ENCODE measurements at regions of chr11 and their contacts with region 1.

Region 1: GRCh38 chr11:65418711-65419459 is 3.7 kb upstream of the NEAT1 start:
- DNase-seq: peak; percentile 98 to 99
- ATAC-seq: peak; percentile 63
- H3K4me3 ChIP-seq: no peak overlapping the region
- H3K27ac ChIP-seq: peak overlapping the region; percentile 97
- H3K4me1 ChIP-seq: no peaks in the 10 kb centered on the region
- H3K27me3 ChIP-seq: peaks cover 0 to 1% of the 10 kb centered on the region in 2 donors

Region 2: DNA sequence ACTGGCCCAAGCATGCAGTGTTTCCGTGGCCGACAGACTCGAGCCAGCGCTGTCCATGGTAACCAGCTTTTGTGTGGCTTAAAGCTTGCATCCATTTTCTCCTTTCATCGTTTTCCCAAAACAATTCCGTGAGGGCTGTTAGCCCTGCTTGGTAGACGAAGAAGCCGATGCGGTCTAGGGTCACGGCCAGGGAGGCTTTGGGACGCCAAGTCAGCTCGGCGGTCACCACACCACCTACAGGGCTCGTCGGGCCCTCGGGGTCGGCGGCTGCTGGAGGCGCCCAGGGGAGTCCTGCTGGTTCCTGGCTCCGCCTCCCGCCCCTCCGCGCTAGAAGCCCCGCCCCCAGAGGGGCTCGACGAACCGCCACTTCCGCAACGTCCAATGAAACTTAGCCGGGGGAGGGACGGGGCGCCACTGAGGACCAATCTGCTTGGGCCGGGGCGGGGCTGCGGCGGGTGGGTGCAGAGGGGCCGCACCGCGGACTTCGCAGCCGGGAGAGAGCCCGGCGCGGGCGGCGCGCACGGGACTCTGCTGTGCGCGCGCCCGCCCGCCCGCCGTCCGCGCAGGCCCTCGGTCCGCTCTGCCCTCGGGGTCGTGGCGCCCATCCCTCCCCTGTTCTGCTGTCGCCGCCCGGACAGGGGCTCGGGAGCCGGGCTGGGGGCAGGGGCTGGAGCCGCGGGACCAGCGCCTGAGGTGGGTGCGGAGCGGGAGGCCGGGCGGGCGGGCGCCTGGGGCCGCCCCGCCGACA is 64.4 kb before region 1 on chr11 and contains the start of gene TIGD3:
- intact Hi-C with region 1: no loop called
- DNase-seq: peak; percentile 99 to 100
- ATAC-seq: peak; percentile 97
- H3K4me3 ChIP-seq: peak within 1 kb of the TSS; percentile 17 to 63
- H3K27ac ChIP-seq: peak within 1 kb of the TSS in 1 of 2 donors; percentile 61
- H3K4me1 ChIP-seq: no peaks in the 10 kb centered on the region
- H3K27me3 ChIP-seq: no peaks in the 10 kb centered on the region
- total RNA-seq, gene TIGD3: 0.16 TPM in 1 of 2 donors, not detected in the other

Region 3: DNA sequence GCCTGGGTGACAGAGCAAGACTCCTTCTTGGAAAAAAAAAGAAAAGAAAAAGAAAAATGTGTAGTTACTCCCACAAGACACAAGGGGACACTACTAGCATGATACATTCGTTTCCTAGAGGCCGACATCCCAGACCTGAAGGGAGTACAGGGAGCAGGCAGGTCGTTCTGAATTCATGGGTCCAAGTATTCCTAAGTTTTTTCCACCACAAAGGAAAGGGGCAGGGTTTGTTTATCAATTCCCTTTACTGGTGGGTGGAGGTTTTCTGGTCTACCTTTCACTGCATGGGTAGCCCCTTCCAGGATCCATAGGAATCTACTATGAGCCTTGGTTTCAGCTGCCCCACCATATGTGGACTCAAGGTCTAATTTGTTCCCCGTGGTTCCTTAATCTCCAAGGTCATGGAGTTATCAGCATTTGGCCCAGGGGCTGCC is 52.5 kb before region 1 on chr11:
- intact Hi-C with region 1: loop called (anchors 2 to 5 kb)
- DNase-seq: no peak
- ATAC-seq: peak; percentile 79
- H3K4me3 ChIP-seq: no peak overlapping the region
- H3K27ac ChIP-seq: no peak overlapping the region
- H3K4me1 ChIP-seq: no peaks in the 10 kb centered on the region
- H3K27me3 ChIP-seq: no peaks in the 10 kb centered on the region

Region 4: GRCh38 chr11:65382033-65382807 is 36.7 kb before region 1 on chr11 and contains the start of gene SLC25A45:
- intact Hi-C with region 1: loop called in 1 of 2 experiments (anchors 5 kb)
- DNase-seq: peak; percentile 95 to 97
- ATAC-seq: peak; percentile 95
- H3K4me3 ChIP-seq: no peak within 1 kb of the TSS
- H3K27ac ChIP-seq: peak within 1 kb of the TSS; percentile 83 to 87
- H3K4me1 ChIP-seq: no peaks in the 10 kb centered on the region
- H3K27me3 ChIP-seq: no peaks in the 10 kb centered on the region
- total RNA-seq, gene SLC25A45: 9.1 to 16.0 TPM

Region 5: DNA sequence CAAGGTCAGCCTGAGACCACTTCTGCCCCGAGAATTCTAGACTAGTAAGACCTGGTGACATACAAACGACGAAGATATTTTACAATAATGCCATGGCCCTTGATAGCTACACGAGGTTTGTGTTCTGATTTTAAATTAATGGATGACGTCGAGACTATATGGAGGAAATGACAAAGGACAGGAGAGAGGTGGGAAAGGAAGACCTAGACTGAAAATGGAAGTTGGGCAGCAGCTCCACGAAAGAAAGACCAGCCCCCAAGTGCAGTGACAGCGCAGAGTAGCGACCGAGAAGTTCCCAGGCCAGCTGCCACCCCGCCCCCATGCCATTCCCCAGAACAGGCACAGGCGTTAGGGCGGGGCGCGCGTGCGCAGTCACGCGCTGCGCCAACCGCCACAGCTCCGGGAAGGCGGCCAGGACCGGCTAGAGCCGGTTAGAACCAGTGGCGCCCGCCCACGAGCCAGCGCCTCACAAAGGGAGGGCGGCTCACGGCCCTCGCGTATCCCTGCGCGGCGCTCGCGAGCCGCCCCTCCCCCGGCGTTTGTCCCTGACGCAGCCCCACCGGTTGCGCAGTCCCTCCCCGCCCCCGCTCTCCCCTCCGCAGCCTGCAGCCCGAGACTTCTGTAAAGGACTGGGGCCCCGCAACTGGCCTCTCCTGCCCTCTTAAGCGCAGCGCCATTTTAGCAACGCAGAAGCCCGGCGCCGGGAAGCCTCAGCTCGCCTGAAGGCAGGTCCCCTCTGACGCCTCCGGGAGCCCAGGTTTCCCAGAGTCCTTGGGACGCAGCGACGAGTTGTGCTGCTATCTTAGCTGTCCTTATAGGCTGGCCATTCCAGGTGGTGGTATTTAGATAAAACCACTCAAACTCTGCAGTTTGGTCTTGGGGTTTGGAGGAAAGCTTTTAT is 78.5 kb after region 1 on chr11:
- intact Hi-C with region 1: loop called in 1 of 2 experiments (anchors 1 kb)
- DNase-seq: peak; percentile 99 to 100
- ATAC-seq: peak; percentile 93
- H3K4me3 ChIP-seq: peak overlapping the region; percentile 60 to 75
- H3K27ac ChIP-seq: peak overlapping the region; percentile 100
- H3K4me1 ChIP-seq: peaks cover 0 to 1% of the 10 kb centered on the region in 2 donors
- H3K27me3 ChIP-seq: peaks cover 0 to 2% of the 10 kb centered on the region in 2 donors

Region 6: DNA sequence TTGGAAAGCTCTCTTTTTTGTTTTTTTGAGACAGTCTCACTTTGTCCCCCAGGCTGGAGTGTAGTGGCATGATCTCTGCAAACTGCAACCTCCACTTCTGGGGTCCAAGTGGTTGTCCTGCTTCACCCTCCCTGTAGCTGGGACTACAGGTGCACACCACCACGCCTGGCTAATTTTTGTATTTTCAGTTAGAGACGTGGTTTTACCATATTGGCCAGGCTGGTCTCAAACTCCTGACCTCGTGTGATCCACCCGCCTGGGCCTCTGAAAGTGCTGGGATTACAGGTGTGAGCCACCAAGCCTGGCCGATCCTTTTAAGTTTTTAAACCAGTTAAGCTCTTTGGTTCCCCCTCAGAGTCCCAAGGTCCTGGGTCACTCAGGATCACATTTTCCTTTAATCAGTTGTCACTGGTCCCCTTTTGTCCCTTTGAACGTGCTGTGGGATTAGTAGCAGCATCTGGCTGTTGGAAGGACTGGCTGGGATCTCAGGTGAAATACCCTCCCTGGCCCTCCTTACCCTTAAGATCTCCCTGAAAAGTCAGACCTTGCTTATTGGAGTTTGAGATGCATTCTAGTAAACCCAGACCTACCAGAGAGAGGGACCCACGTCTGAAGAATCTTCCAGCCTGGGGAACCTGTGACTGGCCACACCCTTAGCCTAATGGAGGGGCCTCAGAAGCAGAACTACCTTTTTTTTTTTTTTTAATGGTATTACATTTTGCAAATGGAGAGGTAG is 88.1 kb after region 1 on chr11:
- intact Hi-C with region 1: loop called (anchors 2 kb)
- DNase-seq: peak; percentile 69 to 78
- ATAC-seq: peak; percentile 53
- H3K4me3 ChIP-seq: no peak overlapping the region
- H3K27ac ChIP-seq: peak overlapping the region; percentile 50 to 59
- H3K4me1 ChIP-seq: peaks cover 0 to 2% of the 10 kb centered on the region in 2 donors
- H3K27me3 ChIP-seq: no peaks in the 10 kb centered on the region

Region 7: DNA sequence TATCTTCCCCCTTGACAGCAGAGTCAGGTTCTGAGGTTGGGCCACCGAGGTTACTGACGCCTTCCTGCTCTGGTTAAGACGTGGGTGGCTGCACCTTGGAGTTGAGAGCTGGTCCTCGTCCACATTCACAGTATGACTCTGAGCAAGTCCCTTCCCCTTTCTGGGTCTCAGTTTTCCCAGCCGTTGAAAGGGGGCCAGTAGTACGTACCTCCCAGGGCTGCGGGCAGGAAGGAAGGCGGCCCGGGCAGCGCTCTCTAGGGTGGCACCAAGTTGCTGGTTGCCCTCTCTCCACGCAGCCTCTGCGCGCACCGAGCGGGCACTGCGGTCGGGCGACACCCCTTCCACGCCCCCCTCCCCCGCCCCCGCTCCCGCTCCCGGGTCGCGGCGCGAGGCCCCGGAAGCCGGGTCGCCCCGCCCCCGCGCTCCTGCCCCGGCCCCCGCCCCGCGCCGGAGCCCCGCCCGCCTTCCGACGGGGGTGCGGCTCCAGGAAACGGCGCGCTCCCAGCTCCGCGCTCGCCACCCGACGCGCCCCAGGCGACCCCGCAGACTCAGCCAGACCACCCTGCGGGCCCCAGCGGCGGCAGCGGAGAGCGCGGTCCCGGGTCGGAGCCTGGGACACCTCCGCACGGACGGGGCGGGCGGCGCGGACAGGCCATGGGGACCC is 156.8 kb after region 1 on chr11 and contains the start of gene EHBP1L1:
- intact Hi-C with region 1: loop called in 1 of 2 experiments (anchors 5 kb)
- DNase-seq: peak; percentile 86 to 93
- ATAC-seq: peak; percentile 17
- H3K4me3 ChIP-seq: peak within 1 kb of the TSS; percentile 82 to 84
- H3K27ac ChIP-seq: peak within 1 kb of the TSS; percentile 25 to 78
- H3K4me1 ChIP-seq: no peaks in the 10 kb centered on the region
- H3K27me3 ChIP-seq: no peaks in the 10 kb centered on the region
- total RNA-seq, gene EHBP1L1: 235 to 266 TPM

Region 8: DNA sequence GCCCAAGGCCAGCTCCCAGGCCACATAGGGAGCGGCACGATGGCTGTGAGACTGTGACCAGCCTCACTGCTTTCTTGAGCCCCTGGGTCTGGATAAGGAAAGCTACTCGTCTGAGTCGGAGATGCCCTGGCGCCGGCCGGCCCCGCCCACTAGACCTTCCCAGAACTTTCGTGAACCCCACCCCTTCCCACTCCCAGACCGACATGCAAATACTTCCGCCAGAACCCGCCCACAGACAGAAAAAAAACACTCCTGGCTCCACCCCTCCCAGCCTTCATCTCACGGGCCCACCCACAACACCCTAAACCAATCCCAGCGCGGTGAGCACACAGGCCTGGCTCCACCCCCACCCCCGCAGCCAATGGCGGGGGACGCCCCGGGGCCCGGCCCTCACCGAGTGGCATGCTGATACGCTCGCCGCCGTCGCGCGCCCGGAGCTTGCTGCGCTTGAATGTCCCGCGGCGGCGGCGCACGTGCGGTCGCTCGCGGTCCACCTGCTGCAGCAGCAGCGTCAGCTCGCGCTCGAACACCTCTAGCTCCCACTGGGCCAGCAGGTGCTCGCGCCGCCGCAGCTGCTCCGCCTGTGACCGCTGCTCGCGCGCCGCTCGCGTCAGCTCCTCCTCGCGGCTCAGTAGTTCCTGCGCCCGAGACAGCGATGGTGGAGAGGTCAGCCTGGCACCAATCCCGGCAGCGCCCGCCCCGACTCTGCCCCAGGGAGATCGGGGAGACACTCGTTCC is 188.2 kb after region 1 on chr11:
- intact Hi-C with region 1: no loop called
- DNase-seq: peak; percentile 93 to 97
- ATAC-seq: peak; percentile 96
- H3K4me3 ChIP-seq: no peak overlapping the region
- H3K27ac ChIP-seq: peak overlapping the region in 1 of 2 donors; percentile 26
- H3K4me1 ChIP-seq: peaks cover 0 to 2% of the 10 kb centered on the region in 2 donors
- H3K27me3 ChIP-seq: no peaks in the 10 kb centered on the region

Region 9: GRCh38 chr11:65764434-65764833 is 345.5 kb after region 1 on chr11:
- intact Hi-C with region 1: no loop called
- DNase-seq: no peak
- ATAC-seq: no peak
- H3K4me3 ChIP-seq: no peak overlapping the region
- H3K27ac ChIP-seq: no peak overlapping the region
- H3K4me1 ChIP-seq: no peaks in the 10 kb centered on the region
- H3K27me3 ChIP-seq: no peaks in the 10 kb centered on the region

Region 10: GRCh38 chr11:65873318-65874156 is 454.7 kb after region 1 on chr11:
- intact Hi-C with region 1: no loop called
- DNase-seq: peak; percentile 97 to 99
- ATAC-seq: peak; percentile 95
- H3K4me3 ChIP-seq: peak overlapping the region; percentile 70 to 78
- H3K27ac ChIP-seq: peak overlapping the region in 1 of 2 donors; percentile 87
- H3K4me1 ChIP-seq: no peaks in the 10 kb centered on the region
- H3K27me3 ChIP-seq: no peaks in the 10 kb centered on the region

Measured in aorta (tissue), 5 donors.